ENCODE measurements at regions of chr19 and their contacts with region 1.

Region 1: GRCh38 chr19:11380653-11381534 is 3.2 kb downstream of the EPOR start:
- DNase-seq: peak; percentile 99
- H3K4me3 ChIP-seq: peak overlapping the region; percentile 58
- H3K4me3 Mint-ChIP-seq: peak overlapping the region; percentile 95
- H3K27ac Mint-ChIP-seq: peak overlapping the region; percentile 98
- H3K4me1 ChIP-seq: 0 out of 2 replicates have a peak, but pooled peaks cover 4% of the 10 kb centered on the region
- H3K4me1 Mint-ChIP-seq: no peaks in the 10 kb centered on the region
- H3K27me3 ChIP-seq: no peaks in the 10 kb centered on the region
- H3K27me3 Mint-ChIP-seq: no peaks in the 10 kb centered on the region
- CTCF ChIP-seq: peak; percentile 68 to 70

Region 2: DNA sequence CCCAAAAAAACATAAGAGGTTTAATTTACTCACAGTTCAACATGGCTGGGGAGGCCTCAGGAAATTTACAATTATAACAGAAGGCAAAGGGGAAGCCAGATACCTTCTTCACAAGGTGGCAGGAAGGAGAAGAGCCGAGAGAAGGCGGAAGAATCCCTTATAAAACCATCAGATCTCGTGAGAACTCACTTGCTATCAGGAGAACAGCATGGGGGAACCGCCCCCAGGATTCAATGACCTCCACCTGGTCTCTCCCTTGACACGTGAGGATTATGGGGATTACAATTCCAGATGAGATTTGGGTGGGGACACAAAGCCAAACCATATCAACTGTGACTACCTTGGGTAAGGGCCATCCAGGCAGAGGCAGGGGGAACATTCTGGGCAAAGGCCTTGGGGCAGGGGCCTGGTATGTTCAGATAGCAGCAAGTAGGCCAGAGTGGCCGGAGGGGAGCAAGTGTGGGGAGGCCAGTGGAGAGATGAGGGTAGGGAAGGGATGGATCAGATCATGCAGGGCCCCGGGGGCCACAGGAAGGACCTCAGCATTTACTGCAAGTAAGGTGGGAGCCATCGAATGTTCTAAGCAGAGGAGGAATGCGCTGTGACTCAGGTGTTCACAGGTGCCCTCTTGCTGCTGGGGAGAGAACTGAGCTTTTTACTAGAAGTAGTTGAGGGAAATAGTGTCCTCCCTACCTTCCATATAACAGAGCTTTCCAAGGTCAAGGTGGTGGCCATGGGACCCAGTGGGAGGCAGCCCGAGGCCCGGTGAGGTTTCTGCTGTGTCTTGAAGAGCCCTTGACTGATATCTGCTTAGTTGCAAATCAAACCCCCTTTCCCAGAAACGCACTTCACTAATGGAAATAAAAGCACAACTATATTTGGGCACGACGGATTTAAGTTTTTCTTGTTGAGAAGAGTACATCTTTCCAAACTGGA is 59.4 kb before region 1 on chr19:
- CTCF ChIA-PET with region 1: interaction called, 14 read pairs
- POLR2A ChIA-PET with region 1: no interaction called
- intact Hi-C with region 1: no loop called
- DNase-seq: no peak
- H3K4me3 ChIP-seq: no peak overlapping the region
- H3K4me3 Mint-ChIP-seq: peak overlapping the region; percentile 25
- H3K27ac Mint-ChIP-seq: peak overlapping the region; percentile 36
- H3K4me1 ChIP-seq: peaks cover 7% of the 10 kb centered on the region; the same call in 1 of the 2 replicates
- H3K4me1 Mint-ChIP-seq: peaks cover 24% of the 10 kb centered on the region
- H3K27me3 ChIP-seq: no peaks in the 10 kb centered on the region
- H3K27me3 Mint-ChIP-seq: no peaks in the 10 kb centered on the region
- CTCF ChIP-seq: no peak

Region 3: GRCh38 chr19:11355160-11356073 is 25.5 kb before region 1 on chr19 and contains the start of gene PLPPR2:
- CTCF ChIA-PET with region 1: no interaction called
- POLR2A ChIA-PET with region 1: no interaction called
- intact Hi-C with region 1: no loop called
- DNase-seq: peak; percentile 91 to 93
- H3K4me3 ChIP-seq: peak within 1 kb of the TSS; percentile 60
- H3K4me3 Mint-ChIP-seq: peak within 1 kb of the TSS; percentile 82
- H3K27ac Mint-ChIP-seq: peak within 1 kb of the TSS; percentile 30
- H3K4me1 ChIP-seq: no peaks in the 10 kb centered on the region
- H3K4me1 Mint-ChIP-seq: peaks cover 5% of the 10 kb centered on the region
- H3K27me3 ChIP-seq: no peaks in the 10 kb centered on the region
- H3K27me3 Mint-ChIP-seq: no peaks in the 10 kb centered on the region
- CTCF ChIP-seq: no peak
- total RNA-seq, gene PLPPR2: 5.6 and 7.4 TPM in 2 replicates

Region 4: GRCh38 chr19:11390933-11391680 is 10.2 kb after region 1 on chr19:
- CTCF ChIA-PET with region 1: interaction called, 14 read pairs
- POLR2A ChIA-PET with region 1: interaction called, 6 read pairs
- intact Hi-C with region 1: no loop called
- DNase-seq: no peak
- H3K4me3 ChIP-seq: no peak overlapping the region
- H3K4me3 Mint-ChIP-seq: no peak overlapping the region
- H3K27ac Mint-ChIP-seq: no peak overlapping the region
- H3K4me1 ChIP-seq: no peaks in the 10 kb centered on the region
- H3K4me1 Mint-ChIP-seq: peaks cover 6% of the 10 kb centered on the region
- H3K27me3 ChIP-seq: no peaks in the 10 kb centered on the region
- H3K27me3 Mint-ChIP-seq: no peaks in the 10 kb centered on the region
- CTCF ChIP-seq: no peak

Region 5: DNA sequence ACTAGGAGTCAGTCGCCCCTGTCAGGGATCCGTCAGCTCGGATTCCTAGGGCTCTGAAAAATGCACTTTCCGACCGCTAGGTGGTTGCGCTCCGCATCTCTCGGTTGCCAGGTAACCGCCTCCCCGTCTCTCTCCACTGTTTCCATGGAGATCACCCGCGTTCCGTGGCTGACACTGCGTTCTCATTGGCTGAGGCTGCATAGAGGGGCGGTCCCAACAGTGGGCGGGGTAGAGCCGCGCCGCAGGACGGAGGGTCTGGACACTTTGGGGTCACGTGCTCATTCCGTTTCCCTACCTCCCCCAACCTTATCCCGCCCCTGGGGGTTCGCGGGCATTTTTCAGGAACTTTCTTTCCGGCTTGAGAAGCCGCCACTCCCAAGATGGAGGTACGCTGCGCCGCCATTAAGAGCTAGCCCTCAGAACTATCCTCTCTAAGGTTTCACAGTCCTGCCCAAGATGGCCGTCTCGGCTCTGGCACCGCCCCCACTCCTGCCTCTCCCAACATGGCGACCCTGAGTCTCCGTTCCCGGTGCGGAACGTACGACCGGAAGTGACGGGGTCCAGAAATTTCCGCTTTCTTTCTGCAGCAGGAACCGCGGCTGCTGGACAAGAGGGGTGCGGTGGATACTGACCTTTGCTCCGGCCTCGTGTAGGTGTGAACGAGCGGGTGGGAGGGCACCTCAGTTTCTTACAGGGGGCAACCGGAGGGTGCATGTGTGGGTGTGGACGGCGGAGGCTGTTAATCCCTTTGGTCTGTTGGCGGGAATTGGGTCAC is 54.4 kb after region 1 on chr19 and contains the starts of genes ODAD3 and PRKCSH:
- CTCF ChIA-PET with region 1: interaction called, 29 read pairs
- POLR2A ChIA-PET with region 1: interaction called, 14 read pairs
- intact Hi-C with region 1: loop called (anchors 1 kb)
- DNase-seq: peak; percentile 99
- H3K4me3 ChIP-seq: peak within 1 kb of the TSS; percentile 86
- H3K4me3 Mint-ChIP-seq: peak within 1 kb of the TSS; percentile 100
- H3K27ac Mint-ChIP-seq: peak within 1 kb of the TSS; percentile 100
- H3K4me1 ChIP-seq: 0 out of 2 replicates have a peak, but pooled peaks cover 3% of the 10 kb centered on the region
- H3K4me1 Mint-ChIP-seq: no peaks in the 10 kb centered on the region
- H3K27me3 ChIP-seq: no peaks in the 10 kb centered on the region
- H3K27me3 Mint-ChIP-seq: no peaks in the 10 kb centered on the region
- CTCF ChIP-seq: peak; percentile 84 to 90
- total RNA-seq, gene ODAD3: not detected in 2 replicates
- total RNA-seq, gene PRKCSH: 412 and 456 TPM in 2 replicates

Region 6: DNA sequence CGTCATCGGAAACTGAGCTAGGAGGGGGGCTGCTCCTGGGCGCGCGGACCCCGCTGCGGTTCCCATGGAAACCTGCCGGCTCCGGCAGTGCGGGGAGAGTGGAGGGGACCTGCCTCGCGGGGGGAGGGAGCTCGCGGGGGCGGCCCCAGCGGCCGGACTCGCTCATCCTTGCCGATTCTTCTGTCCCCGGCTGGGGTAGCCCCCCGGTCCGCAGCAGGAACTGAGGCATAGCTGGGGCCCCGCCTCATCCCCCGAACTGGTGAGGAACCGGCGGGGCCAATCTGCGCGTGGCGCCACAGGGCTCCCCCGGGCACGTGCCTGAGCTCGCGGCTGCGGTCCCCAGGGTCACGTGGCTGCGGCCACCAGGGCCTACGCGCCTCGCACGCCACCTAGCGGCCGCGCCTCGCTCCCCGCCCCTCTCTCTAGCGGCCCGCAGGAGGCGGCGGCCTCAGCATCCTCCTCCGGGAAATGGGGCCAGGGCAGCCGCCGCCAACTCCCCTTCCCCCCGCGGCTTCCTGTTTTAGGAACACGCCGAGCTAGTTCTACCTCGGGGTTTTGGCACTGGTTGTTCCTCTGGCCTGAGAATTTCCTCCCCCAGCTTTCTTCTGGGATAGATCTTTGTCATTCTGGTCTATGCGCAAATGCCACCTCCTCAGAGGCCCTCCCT is 101.6 kb after region 1 on chr19:
- CTCF ChIA-PET with region 1: interaction called, 42 read pairs
- POLR2A ChIA-PET with region 1: interaction called, 7 read pairs
- intact Hi-C with region 1: loop called (anchors 1 kb)
- DNase-seq: peak; percentile 78 to 88
- H3K4me3 ChIP-seq: peak overlapping the region; percentile 45
- H3K4me3 Mint-ChIP-seq: peak overlapping the region; percentile 71
- H3K27ac Mint-ChIP-seq: peak overlapping the region; percentile 19
- H3K4me1 ChIP-seq: peaks cover 16% of the 10 kb centered on the region
- H3K4me1 Mint-ChIP-seq: no peaks in the 10 kb centered on the region
- H3K27me3 ChIP-seq: no peaks in the 10 kb centered on the region; the same call in 1 of the 2 replicates
- H3K27me3 Mint-ChIP-seq: peaks cover 9% of the 10 kb centered on the region
- CTCF ChIP-seq: peak; percentile 81 to 91

Measured in Caco-2 (cell line).